IMR-90 (cell line): ENCODE measurements at regions of chr1 and their contacts with region 1.

Region 1: DNA sequence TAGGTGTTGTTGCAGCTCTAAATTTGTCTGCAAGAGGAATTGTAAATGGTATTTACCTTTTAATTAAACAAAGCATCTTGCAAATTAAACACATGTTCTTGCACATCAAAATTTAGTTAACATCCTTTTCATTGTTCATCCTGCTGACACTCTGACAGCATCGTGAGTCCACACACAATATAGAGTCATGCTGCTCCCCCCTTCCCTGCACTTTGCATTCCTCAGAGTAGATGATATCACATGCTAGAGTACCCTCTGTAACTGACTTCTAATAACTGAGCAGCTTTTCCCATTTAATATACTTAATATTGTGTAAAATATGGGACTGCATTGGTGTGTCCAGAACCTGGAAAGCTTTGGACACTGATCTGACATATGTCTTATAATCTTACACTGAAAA is 138.8 kb upstream of the DPYD start:
- DNase-seq: peak; percentile 57
- ATAC-seq: 0 out of 2 replicates have a peak, but pooled peaks have one; percentile 51
- H3K4me3 ChIP-seq: no peak overlapping the region
- H3K27ac ChIP-seq: no peak overlapping the region
- H3K4me1 ChIP-seq: no peaks in the 10 kb centered on the region
- H3K27me3 ChIP-seq: no peaks in the 10 kb centered on the region
- CTCF ChIP-seq: no peak
- POLR2A ChIP-seq: no peak
- RAD21 ChIP-seq: no peak

Region 2: GRCh38 chr1:98452162-98452561 is 392.5 kb after region 1 on chr1:
- CTCF ChIA-PET with region 1: no interaction called
- POLR2A ChIA-PET with region 1: no interaction called
- dilution Hi-C with region 1: no loop called
- in situ Hi-C with region 1: no loop called
- intact Hi-C with region 1: loop called (anchors 5 kb)
- DNase-seq: no peak
- ATAC-seq: no peak
- H3K4me3 ChIP-seq: no peak overlapping the region
- H3K27ac ChIP-seq: no peak overlapping the region
- H3K4me1 ChIP-seq: no peaks in the 10 kb centered on the region
- H3K27me3 ChIP-seq: no peaks in the 10 kb centered on the region
- CTCF ChIP-seq: no peak
- POLR2A ChIP-seq: no peak
- RAD21 ChIP-seq: no peak